GM12878 (cell line): ENCODE measurements at regions of chr11 and their contacts with region 1.

Region 1: GRCh38 chr11:121441533-121441932 is 10.6 kb upstream of the SORL1 start:
- DNase-seq: no peak
- ATAC-seq: no peak
- H3K4me3 ChIP-seq: no peak overlapping the region
- H3K27ac ChIP-seq: no peak overlapping the region
- H3K4me1 ChIP-seq: peaks cover 15% of the 10 kb centered on the region
- H3K27me3 ChIP-seq: no peaks in the 10 kb centered on the region
- CTCF ChIP-seq: no peak
- EP300 ChIP-seq: no peak
- POLR2A ChIP-seq: no peak
- RAD21 ChIP-seq: no peak

Region 2: GRCh38 chr11:121426476-121427399 is 14.8 kb before region 1 on chr11:
- CTCF ChIA-PET with region 1: interaction called, 8 read pairs
- POLR2A ChIA-PET with region 1: interaction called, 24 read pairs
- RAD21 ChIA-PET with region 1: interaction called, 42 read pairs
- SMC1A ChIA-PET with region 1: interaction called, 241 read pairs
- in situ Hi-C with region 1: no loop called
- intact Hi-C with region 1: loop called (anchors 1 kb)
- DNase-seq: no peak
- ATAC-seq: peak; percentile 57
- H3K4me3 ChIP-seq: peak overlapping the region; percentile 39; the same call in 1 of the 2 replicates
- H3K27ac ChIP-seq: no peak overlapping the region
- H3K4me1 ChIP-seq: peaks cover 46% of the 10 kb centered on the region
- H3K27me3 ChIP-seq: no peaks in the 10 kb centered on the region
- CTCF ChIP-seq: peak in 2 of 3 experiments; percentile 14 to 21; a peak in 1 of 6 replicates
- EP300 ChIP-seq: no peak
- POLR2A ChIP-seq: no peak
- RAD21 ChIP-seq: no peak